ENCODE measurements at regions of chr15 and their contacts with region 1.

Region 1: GRCh38 chr15:77496710-77497103 is 76.0 kb downstream of the HMG20A start:
- DNase-seq: peak; percentile 79 to 85 (median 80)
- ATAC-seq: peak; percentile 97
- H3K4me3 ChIP-seq: no peak overlapping the region
- H3K27ac ChIP-seq: no peak overlapping the region
- H3K4me1 ChIP-seq: peaks cover 4 to 18% of the 10 kb centered on the region in 2 experiments
- H3K27me3 ChIP-seq: no peaks in the 10 kb centered on the region
- CTCF ChIP-seq: peak; percentile 92 to 95 (median 93)
- EP300 ChIP-seq: no peak
- POLR2A ChIP-seq: no peak
- RAD21 ChIP-seq: peak; percentile 86 to 96

Region 2: GRCh38 chr15:77107531-77108355 is 389.0 kb before region 1 on chr15:
- CTCF ChIA-PET with region 1: interaction called, 14 read pairs
- POLR2A ChIA-PET with region 1: no interaction called
- in situ Hi-C with region 1: no loop called
- intact Hi-C with region 1: no loop called
- DNase-seq: peak; percentile 37 to 52 (median 47)
- ATAC-seq: peak; percentile 91
- H3K4me3 ChIP-seq: no peak overlapping the region
- H3K27ac ChIP-seq: no peak overlapping the region
- H3K4me1 ChIP-seq: no peaks in the 10 kb centered on the region
- H3K27me3 ChIP-seq: no peaks in the 10 kb centered on the region
- CTCF ChIP-seq: peak; percentile 67 to 74 (median 70)
- EP300 ChIP-seq: no peak
- POLR2A ChIP-seq: no peak
- RAD21 ChIP-seq: peak; percentile 50 to 82; a peak in 3 of 4 replicates

Region 3: GRCh38 chr15:77118882-77119321 is 377.8 kb before region 1 on chr15:
- CTCF ChIA-PET with region 1: interaction called, 8 read pairs
- POLR2A ChIA-PET with region 1: no interaction called
- in situ Hi-C with region 1: loop called (anchors 5 kb)
- intact Hi-C with region 1: loop called (anchors 1 kb)
- DNase-seq: peak in 2 of 4 experiments; percentile 37 to 55
- ATAC-seq: peak; percentile 69
- H3K4me3 ChIP-seq: no peak overlapping the region
- H3K27ac ChIP-seq: no peak overlapping the region
- H3K4me1 ChIP-seq: no peaks in the 10 kb centered on the region
- H3K27me3 ChIP-seq: no peaks in the 10 kb centered on the region
- CTCF ChIP-seq: peak; percentile 34 to 76 (median 57); a peak in 5 of 6 replicates
- EP300 ChIP-seq: no peak
- POLR2A ChIP-seq: no peak
- RAD21 ChIP-seq: peak; percentile 37 to 72; a peak in 3 of 4 replicates

Region 4: GRCh38 chr15:77186594-77187011 is 310.1 kb before region 1 on chr15:
- CTCF ChIA-PET with region 1: interaction called, 22 read pairs
- POLR2A ChIA-PET with region 1: interaction called, 3 read pairs
- in situ Hi-C with region 1: loop called (anchors 5 kb)
- intact Hi-C with region 1: loop called (anchors 1 kb)
- DNase-seq: peak in 3 of 4 experiments; percentile 13 to 45 (median 27)
- ATAC-seq: peak; percentile 50; the same call in 1 of the 3 replicates
- H3K4me3 ChIP-seq: no peak overlapping the region
- H3K27ac ChIP-seq: no peak overlapping the region
- H3K4me1 ChIP-seq: peaks cover 0 to 25% of the 10 kb centered on the region in 2 experiments; a peak in 3 of 5 replicates
- H3K27me3 ChIP-seq: no peaks in the 10 kb centered on the region
- CTCF ChIP-seq: peak; percentile 55 to 74 (median 59); a peak in 5 of 6 replicates
- EP300 ChIP-seq: no peak
- POLR2A ChIP-seq: no peak
- RAD21 ChIP-seq: peak; percentile 82 to 86

Region 5: GRCh38 chr15:77309392-77309791 is 187.3 kb before region 1 on chr15:
- CTCF ChIA-PET with region 1: no interaction called
- POLR2A ChIA-PET with region 1: no interaction called
- in situ Hi-C with region 1: no loop called
- intact Hi-C with region 1: loop called (anchors 5 kb)
- DNase-seq: no peak
- ATAC-seq: no peak
- H3K4me3 ChIP-seq: no peak overlapping the region
- H3K27ac ChIP-seq: no peak overlapping the region
- H3K4me1 ChIP-seq: peaks cover 0 to 5% of the 10 kb centered on the region in 2 experiments; a peak in 2 of 5 replicates
- H3K27me3 ChIP-seq: no peaks in the 10 kb centered on the region
- CTCF ChIP-seq: no peak
- EP300 ChIP-seq: no peak
- POLR2A ChIP-seq: no peak
- RAD21 ChIP-seq: no peak

Region 6: GRCh38 chr15:77419836-77420609 is 76.7 kb before region 1 on chr15 and contains the start of gene PEAK1:
- CTCF ChIA-PET with region 1: no interaction called
- POLR2A ChIA-PET with region 1: no interaction called
- in situ Hi-C with region 1: no loop called
- intact Hi-C with region 1: loop called (anchors 5 kb)
- DNase-seq: peak; percentile 93 to 99 (median 94)
- ATAC-seq: peak; percentile 95
- H3K4me3 ChIP-seq: peak within 1 kb of the TSS; percentile 94
- H3K27ac ChIP-seq: peak within 1 kb of the TSS; percentile 98
- H3K4me1 ChIP-seq: peaks cover 18 to 38% of the 10 kb centered on the region in 2 experiments; a peak in 4 of 5 replicates
- H3K27me3 ChIP-seq: no peaks in the 10 kb centered on the region
- CTCF ChIP-seq: no peak
- EP300 ChIP-seq: no peak
- POLR2A ChIP-seq: peak; percentile 66
- RAD21 ChIP-seq: no peak
- polyA plus RNA-seq, gene PEAK1: 0.99 to 1.4 TPM